Spleen (tissue), 13 donors: ENCODE measurements at regions of chr19 and their contacts with region 1.

Region 1: DNA sequence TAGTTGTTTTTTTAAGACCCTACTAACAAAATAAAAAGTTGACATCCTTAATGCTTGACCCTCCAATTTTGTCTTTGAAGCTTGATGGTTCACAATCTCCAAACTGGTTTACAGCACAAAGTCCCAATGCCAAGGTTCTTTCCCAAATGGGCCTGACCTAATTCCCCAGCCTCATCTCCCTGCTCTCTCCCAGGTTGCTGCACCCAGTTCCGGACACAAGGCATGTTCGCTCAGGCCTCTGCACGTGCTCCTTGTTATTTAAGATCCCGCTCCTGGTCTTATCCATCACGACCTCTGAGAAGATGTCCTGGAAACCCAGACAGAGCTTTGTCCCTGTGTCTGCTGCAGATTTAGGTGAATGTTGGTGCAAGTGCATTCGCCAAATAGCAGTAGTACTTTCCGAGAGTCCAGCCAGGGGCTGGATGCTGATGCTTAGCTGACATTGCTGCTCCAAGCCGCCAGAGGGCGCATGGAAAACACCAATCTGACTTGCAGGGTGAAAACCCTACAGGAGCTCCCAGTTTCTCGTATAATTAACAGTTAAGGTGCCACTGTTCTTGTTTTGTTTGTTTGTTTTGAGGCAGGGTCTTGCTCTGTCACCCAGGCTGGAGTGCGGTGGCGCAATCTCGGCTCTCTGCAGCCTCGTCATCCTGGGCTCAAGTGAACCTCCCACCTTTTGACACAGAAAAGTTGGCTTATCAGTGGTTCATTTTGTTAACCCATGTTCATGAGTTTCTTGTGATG is 18.5 kb downstream of the LYPD3 start:
- DNase-seq: peak; percentile 93
- H3K4me3 ChIP-seq: no peak overlapping the region
- H3K27ac ChIP-seq: no peak overlapping the region
- H3K4me1 ChIP-seq: peaks cover 0 to 21% (median 7%) of the 10 kb centered on the region in 6 donors
- H3K27me3 ChIP-seq: no peaks in the 10 kb centered on the region
- CTCF ChIP-seq: peak; percentile 92 to 98 (median 95)
- POLR2A ChIP-seq: no peak

Region 2: DNA sequence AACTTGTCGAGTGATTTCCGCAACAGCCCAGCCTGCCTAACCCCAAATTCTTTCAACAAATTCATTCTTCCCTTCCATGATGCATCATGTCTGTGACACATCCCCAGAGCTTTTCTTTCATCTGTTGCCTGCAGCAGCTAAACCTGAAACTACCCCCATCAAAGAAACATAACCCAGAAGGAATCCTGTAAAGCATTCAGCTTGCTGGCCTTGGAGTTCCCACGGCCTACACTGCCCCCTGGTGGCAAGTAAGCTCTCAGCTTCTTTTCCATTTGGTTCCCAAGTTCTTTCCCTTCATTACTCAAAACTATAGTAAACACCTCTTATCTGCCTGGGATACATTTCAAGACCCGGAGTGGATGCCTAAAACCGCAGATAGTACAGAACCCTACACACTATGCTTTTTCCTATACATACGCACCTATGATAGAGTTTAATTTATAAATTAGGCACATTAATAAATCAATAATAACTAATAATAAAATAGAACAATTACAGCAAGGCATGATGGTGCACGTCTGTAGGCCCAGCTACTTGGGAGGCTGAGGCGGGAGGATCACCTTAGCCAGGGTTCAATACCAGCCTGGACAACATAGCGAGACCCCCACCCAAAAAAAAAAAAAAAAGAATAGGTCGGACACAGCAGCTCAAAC is 72.6 kb after region 1 on chr19:
- intact Hi-C with region 1: loop called (anchors 2 kb)
- DNase-seq: peak; percentile 92
- H3K4me3 ChIP-seq: no peak overlapping the region
- H3K27ac ChIP-seq: peak overlapping the region in 1 of 8 donors; percentile 0
- H3K4me1 ChIP-seq: peaks cover 4 to 65% (median 21%) of the 10 kb centered on the region in 6 donors
- H3K27me3 ChIP-seq: no peaks in the 10 kb centered on the region
- CTCF ChIP-seq: peak; percentile 80 to 94 (median 88)
- POLR2A ChIP-seq: no peak